WTC11 (cell line): ENCODE measurements at regions of chr22 and their contacts with region 1.

Region 1: DNA sequence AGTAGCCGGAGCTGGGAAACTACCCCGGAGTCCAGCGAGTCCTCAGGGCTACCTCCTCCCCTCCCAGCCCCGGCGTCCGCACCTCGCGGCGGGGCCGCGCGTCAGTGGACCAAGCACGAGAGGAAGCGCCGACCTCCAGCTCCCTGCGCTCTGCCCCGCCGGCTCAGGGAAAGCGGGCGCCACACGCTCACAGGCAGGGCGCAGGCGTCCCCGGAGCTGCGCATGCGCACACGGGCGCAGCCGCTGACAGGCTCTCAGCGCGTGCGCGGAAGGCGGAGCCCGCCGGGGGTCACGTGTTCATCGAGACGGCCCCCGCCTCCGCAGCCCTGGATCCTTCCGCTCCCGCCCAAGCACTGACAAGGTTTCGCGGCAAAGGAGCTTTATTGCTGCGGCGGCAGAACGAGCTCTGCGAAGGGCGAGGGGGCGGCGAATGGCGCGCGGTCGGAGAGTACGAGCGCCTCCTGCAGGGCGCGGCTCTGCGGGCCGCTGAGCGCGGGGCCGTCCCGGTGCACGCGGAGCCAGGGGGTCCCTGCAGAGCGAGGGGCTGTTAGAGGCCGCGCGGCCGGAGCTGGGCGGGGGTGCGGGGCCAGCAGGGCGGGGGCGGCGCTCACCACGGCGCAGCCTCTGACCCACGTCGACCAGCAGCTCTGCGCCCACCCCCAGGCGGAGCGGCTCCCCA is at the start of gene SCO2:
- DNase-seq: peak; percentile 96
- ATAC-seq: peak; percentile 51
- H3K4me3 Mint-ChIP-seq: peak within 1 kb of the TSS; percentile 82
- H3K27ac Mint-ChIP-seq: peak within 1 kb of the TSS; percentile 84; the same call in 1 of the 2 replicates
- H3K4me1 Mint-ChIP-seq: peaks cover 13% of the 10 kb centered on the region
- H3K27me3 Mint-ChIP-seq: peaks cover 38% of the 10 kb centered on the region
- CTCF ChIP-seq: no peak
- total RNA-seq, gene SCO2: 1.5 to 5.5 TPM in 2 of 3 replicates, not detected in the other

Region 2: GRCh38 chr22:50236731-50237409 is 288.7 kb before region 1 on chr22:
- CTCF ChIA-PET with region 1: no interaction called
- POLR2A ChIA-PET with region 1: no interaction called
- DNase-seq: no peak
- ATAC-seq: peak; percentile 16; the same call in 1 of the 2 replicates
- H3K4me3 Mint-ChIP-seq: no peak overlapping the region
- H3K27ac Mint-ChIP-seq: no peak overlapping the region
- H3K4me1 Mint-ChIP-seq: no peaks in the 10 kb centered on the region; the same call in 1 of the 2 replicates
- H3K27me3 Mint-ChIP-seq: no peaks in the 10 kb centered on the region
- CTCF ChIP-seq: peak; percentile 17; the same call in 1 of the 2 replicates

Region 3: DNA sequence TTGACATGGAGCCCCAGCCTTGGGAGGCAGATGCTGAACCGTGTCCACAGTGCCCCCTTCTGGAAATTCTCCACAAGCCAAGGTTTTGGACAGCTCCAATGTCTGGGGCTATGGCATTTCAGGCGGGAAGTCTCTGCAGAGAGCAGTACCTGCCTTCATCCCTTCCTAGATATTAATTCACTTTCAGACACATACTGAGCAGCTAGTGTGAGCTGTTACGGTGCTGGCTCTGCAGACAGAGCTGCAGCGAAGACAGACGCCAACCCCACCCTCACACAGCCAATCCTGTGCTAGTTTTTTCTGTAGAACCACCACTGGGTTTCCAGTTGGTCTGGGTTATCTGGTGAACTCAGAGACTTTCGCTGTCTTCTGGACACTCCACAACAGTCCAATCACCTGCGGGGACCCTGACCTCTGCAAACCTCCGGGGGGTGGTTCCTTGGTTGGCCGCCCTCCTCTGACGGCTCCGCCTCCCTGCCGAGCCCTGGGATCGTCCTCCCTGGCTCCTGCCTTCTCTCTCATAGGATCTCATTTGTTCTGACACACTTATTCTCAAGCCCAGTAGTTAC is 27.1 kb before region 1 on chr22:
- CTCF ChIA-PET with region 1: interaction called, 24 read pairs
- POLR2A ChIA-PET with region 1: interaction called, 4 read pairs
- DNase-seq: peak; percentile 85
- ATAC-seq: peak; percentile 97
- H3K4me3 Mint-ChIP-seq: no peak overlapping the region
- H3K27ac Mint-ChIP-seq: no peak overlapping the region
- H3K4me1 Mint-ChIP-seq: peaks cover 6% of the 10 kb centered on the region
- H3K27me3 Mint-ChIP-seq: peaks cover 3% of the 10 kb centered on the region
- CTCF ChIP-seq: peak; percentile 33; the same call in 1 of the 2 replicates

Region 4: DNA sequence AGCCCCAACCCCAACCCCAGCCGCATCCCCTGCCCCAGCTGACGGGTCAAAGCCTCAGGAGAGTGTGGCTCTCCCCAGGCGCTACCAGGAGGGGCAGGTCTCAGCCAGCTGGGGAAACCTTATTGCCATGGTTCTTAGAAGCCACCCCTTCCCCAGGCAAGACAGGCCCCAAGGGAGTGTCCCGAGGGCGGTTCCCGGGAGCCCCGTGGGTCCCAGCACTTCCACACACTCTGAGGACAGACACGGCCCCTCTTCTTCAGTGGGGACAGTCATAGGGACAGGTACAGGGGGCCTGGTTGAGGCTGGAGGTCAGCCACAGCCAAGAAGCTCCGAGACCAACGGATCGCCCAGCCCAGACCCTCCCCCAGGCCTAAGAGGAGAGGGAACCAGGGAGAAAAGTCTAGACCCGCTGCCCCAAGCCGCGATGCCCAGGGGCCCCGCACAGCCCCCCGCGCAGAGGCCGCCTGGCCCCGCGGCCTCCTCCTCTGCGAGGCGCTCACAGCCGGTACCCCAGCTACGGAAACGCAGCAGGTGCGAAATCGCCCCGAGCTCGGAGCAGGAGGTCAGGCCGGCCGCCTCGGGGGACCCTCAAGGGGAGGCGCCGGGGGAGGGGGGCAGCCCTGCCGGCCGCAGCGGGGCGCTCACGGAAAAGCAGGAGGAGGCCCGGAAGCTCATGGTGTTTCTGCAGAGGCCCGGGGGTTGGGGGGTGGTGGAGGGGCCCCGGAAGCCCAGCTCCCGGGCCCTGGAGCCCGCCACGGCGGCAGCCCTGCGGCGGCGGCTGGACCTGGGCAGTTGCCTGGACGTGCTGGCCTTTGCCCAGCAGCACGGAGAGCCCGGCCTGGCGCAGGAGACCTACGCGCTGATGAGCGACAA is 22.7 kb after region 1 on chr22:
- CTCF ChIA-PET with region 1: interaction called, 15 read pairs
- POLR2A ChIA-PET with region 1: no interaction called
- DNase-seq: no peak
- ATAC-seq: no peak
- H3K4me3 Mint-ChIP-seq: no peak overlapping the region
- H3K27ac Mint-ChIP-seq: no peak overlapping the region
- H3K4me1 Mint-ChIP-seq: no peaks in the 10 kb centered on the region
- H3K27me3 Mint-ChIP-seq: peaks cover 11% of the 10 kb centered on the region
- CTCF ChIP-seq: no peak

Region 5: GRCh38 chr22:50582562-50583293 is 57.2 kb after region 1 on chr22 and contains the start of gene CHKB:
- CTCF ChIA-PET with region 1: interaction called, 11 read pairs
- POLR2A ChIA-PET with region 1: interaction called, 3 read pairs
- DNase-seq: peak; percentile 99
- ATAC-seq: peak; percentile 95
- H3K4me3 Mint-ChIP-seq: peak within 1 kb of the TSS; percentile 97
- H3K27ac Mint-ChIP-seq: peak within 1 kb of the TSS; percentile 87
- H3K4me1 Mint-ChIP-seq: peaks cover 9% of the 10 kb centered on the region
- H3K27me3 Mint-ChIP-seq: peaks cover 14% of the 10 kb centered on the region
- CTCF ChIP-seq: no peak
- total RNA-seq, gene CHKB: 75.4 to 80.0 TPM (median 76.1 TPM) in 3 replicates

Region 6: DNA sequence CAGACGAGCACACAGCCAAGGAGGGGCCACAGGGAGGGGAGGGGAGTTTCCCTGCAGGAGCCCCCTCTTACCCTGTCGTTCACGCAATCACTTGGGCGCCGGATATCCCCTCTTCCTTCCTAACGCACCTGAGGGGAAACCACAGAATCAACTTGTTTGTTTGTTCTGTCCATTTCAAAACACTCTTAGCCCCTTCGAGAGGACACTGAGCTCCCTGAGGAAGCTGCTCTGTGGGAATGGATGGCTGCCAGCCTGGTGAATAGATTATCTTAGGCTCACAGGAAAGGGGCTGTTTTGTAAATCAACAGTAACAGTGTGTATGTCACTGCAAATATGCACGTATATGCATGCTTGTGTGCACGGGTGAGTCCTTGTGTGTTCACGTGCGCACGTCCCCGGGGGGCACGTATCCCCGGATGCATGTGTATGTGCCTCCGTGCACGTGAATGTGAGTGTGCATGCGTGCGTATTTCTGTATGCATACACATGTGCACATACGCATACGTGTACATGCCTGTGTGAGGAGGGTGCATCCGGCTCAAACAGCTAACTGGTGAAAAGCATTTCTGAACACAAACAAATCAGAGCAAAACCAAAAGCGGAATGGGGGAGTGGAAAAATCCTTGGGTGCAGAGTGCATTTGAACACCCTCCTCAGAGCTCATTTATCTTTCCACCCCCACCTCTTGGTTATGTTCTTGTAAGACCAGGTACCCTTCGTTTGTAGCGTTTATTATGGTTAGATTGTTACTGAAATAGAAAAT is 95.2 kb after region 1 on chr22:
- CTCF ChIA-PET with region 1: interaction called, 16 read pairs
- POLR2A ChIA-PET with region 1: interaction called, 3 read pairs
- DNase-seq: peak; percentile 92
- ATAC-seq: peak; percentile 93
- H3K4me3 Mint-ChIP-seq: peak overlapping the region; percentile 57
- H3K27ac Mint-ChIP-seq: no peak overlapping the region
- H3K4me1 Mint-ChIP-seq: peaks cover 24% of the 10 kb centered on the region
- H3K27me3 Mint-ChIP-seq: peaks cover 16% of the 10 kb centered on the region; the same call in 1 of the 2 replicates
- CTCF ChIP-seq: no peak; the same call in 1 of the 2 replicates